Panc1 (cell line): ENCODE measurements at regions of chr17 and their contacts with region 1.

Region 1: DNA sequence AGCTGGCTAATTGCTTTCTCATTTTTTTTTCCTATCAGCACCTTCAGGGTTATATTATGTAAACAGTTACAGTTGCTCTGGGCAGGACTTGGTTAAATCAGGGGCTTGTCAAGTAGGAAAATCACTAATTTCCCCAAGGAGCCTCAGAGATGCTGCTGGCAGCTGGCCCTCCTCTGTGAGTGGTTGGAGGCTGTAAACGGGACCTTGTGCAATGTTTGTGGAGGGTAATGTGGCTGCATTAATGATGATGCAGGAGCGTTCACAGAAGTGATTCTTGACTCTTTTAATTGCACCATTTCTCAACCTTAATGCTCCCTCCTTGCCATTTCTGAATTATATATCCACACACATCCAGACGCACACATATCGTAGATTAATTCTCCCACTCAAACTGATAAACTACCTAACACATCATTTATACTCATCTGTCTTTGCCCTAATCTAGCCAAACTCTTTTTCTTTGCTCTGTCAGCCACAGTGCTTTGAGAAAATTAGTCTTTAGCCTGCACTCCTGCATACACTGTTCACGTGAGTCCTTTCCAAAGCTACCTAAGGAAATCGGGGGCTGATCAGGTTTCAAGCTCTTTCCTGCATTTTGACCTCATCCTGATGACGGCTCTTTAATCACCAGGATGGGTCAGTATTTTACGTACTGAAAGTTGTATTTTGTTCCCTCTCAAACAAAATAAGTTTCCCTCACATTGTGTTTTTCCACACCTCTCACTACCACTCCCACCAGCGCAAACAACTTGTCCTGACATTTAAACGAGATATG is 154.4 kb upstream of the PIRT start:
- DNase-seq: no peak
- ATAC-seq: no peak
- H3K4me3 ChIP-seq: no peak overlapping the region
- H3K27ac ChIP-seq: no peak overlapping the region
- H3K4me1 ChIP-seq: no peaks in the 10 kb centered on the region
- H3K27me3 ChIP-seq: no peaks in the 10 kb centered on the region
- CTCF ChIP-seq: no peak

Region 2: GRCh38 chr17:10888858-10889257 is 103.4 kb before region 1 on chr17:
- CTCF ChIA-PET with region 1: no interaction called
- POLR2A ChIA-PET with region 1: no interaction called
- in situ Hi-C with region 1: no loop called
- intact Hi-C with region 1: no loop called
- DNase-seq: no peak
- ATAC-seq: no peak
- H3K4me3 ChIP-seq: no peak overlapping the region
- H3K27ac ChIP-seq: no peak overlapping the region
- H3K4me1 ChIP-seq: no peaks in the 10 kb centered on the region
- H3K27me3 ChIP-seq: no peaks in the 10 kb centered on the region
- CTCF ChIP-seq: no peak

Region 3: GRCh38 chr17:10939366-10939765 is 52.9 kb before region 1 on chr17:
- CTCF ChIA-PET with region 1: interaction called, 10 read pairs
- POLR2A ChIA-PET with region 1: no interaction called
- in situ Hi-C with region 1: no loop called
- intact Hi-C with region 1: no loop called
- DNase-seq: no peak
- ATAC-seq: no peak
- H3K4me3 ChIP-seq: no peak overlapping the region
- H3K27ac ChIP-seq: no peak overlapping the region
- H3K4me1 ChIP-seq: no peaks in the 10 kb centered on the region
- H3K27me3 ChIP-seq: no peaks in the 10 kb centered on the region
- CTCF ChIP-seq: no peak

Region 4: DNA sequence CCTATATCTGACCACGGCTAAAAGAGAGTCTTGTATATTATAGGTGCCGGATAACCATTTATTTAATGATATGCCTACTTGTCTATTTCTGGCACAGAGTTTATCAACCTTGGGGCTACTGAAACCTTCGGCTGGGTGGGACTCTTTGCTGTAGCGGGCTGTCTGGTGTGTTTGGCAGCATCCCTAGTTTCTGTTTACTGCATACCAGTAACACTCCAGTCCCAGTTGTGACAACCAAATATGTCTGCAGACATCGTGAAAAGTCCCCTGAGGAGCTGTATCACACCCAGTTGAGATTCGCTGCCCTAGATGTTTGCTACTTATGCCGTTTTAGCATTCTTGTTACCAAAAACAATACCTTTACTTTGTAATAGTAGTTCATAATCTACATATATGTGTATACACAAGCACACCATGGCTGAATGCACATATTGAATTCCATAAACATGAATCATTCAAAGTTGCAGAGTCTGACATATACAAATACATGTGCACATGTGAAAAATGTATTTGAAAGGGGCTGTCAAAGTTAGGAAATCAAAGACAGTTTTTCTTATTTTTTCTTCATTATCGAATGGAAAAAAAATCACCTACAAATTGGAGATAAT is 159.6 kb after region 1 on chr17:
- CTCF ChIA-PET with region 1: no interaction called
- POLR2A ChIA-PET with region 1: no interaction called
- in situ Hi-C with region 1: no loop called
- intact Hi-C with region 1: no loop called
- DNase-seq: no peak
- ATAC-seq: no peak
- H3K4me3 ChIP-seq: no peak overlapping the region
- H3K27ac ChIP-seq: no peak overlapping the region
- H3K4me1 ChIP-seq: no peaks in the 10 kb centered on the region
- H3K27me3 ChIP-seq: no peaks in the 10 kb centered on the region
- CTCF ChIP-seq: no peak

Region 5: DNA sequence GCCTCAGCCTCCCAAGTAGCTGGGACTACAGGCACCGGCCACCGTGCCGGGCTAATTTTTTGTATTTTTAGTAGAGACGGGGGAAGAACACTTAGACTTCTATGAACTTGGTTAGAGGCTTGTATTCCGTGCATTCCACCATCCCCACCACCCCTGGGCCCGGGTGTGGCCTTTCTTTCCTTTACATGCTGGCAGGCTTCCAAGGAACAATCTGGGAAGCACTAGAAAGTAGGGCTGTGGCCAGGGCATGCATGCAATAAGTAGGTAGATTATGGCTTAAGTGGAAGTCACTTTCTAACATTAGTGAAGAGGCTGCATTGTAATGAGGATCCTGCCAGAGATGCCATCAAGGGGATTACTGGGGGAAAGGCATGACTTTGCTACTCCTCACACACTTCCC is 420.4 kb after region 1 on chr17:
- CTCF ChIA-PET with region 1: no interaction called
- POLR2A ChIA-PET with region 1: interaction called, 11 read pairs
- in situ Hi-C with region 1: no loop called
- intact Hi-C with region 1: no loop called
- DNase-seq: no peak
- ATAC-seq: no peak
- H3K4me3 ChIP-seq: no peak overlapping the region
- H3K27ac ChIP-seq: no peak overlapping the region
- H3K4me1 ChIP-seq: no peaks in the 10 kb centered on the region
- H3K27me3 ChIP-seq: no peaks in the 10 kb centered on the region
- CTCF ChIP-seq: no peak